Activated CD4-positive, alpha-beta T cell treated with anti-CD3 and anti-CD28 coated beads for 36 hours (primary cell): ENCODE measurements at regions of chr4 and their contacts with region 1.

Region 1: DNA sequence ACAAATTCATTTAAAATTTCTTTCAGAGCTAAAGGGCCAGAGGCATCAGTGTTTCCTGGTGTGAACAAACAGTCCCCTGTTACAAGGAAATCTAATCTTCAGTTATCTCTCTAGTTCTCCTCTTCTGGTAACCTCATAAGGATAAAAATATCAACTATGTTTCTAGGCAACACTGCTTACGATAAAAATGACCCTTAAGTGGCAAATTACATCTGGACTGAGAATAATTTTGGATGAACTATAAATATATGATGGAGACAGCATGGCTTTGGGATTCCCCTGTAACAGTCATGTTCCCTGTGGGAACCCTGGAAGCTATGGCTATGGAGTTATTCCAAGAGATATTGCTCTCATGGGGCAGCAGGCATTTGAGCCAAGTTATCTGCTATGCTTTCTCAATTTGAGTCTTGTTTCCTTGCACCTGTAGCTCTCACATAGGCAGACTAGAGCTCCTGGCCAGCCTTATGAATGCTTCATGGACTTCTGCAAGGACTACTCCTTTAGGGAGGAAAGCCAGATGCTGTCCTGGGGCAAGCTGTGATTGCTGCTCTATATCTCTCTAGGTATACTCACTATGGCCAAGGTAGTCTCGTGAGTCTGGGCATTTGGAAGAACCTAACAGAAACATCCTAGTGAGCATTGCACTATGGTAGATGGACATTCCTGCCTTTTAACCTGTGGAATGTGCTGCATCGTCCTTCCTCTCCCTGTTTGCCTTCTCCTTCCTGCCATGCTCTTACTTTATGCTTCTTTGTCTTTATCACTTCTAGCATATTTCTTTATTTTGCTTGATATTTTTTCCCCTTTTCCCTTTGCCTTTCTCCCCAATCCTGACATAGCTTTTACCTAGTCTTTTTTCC is 14.2 kb downstream of the C4orf33 start:
- DNase-seq: no peak
- ATAC-seq: no peak
- H3K4me3 Mint-ChIP-seq: no peak overlapping the region
- H3K27ac Mint-ChIP-seq: no peak overlapping the region
- H3K4me1 Mint-ChIP-seq: no peaks in the 10 kb centered on the region
- H3K27me3 Mint-ChIP-seq: no peaks in the 10 kb centered on the region

Region 2: GRCh38 chr4:128558896-128559679 is 551.1 kb before region 1 on chr4:
- CTCF ChIA-PET with region 1: no interaction called
- POLR2A ChIA-PET with region 1: no interaction called
- intact Hi-C with region 1: loop called in 1 of 2 experiments (anchors 10 kb)
- DNase-seq: no peak
- ATAC-seq: no peak
- H3K4me3 Mint-ChIP-seq: no peak overlapping the region
- H3K27ac Mint-ChIP-seq: no peak overlapping the region
- H3K4me1 Mint-ChIP-seq: peaks cover 1% of the 10 kb centered on the region
- H3K27me3 Mint-ChIP-seq: no peaks in the 10 kb centered on the region

Region 3: DNA sequence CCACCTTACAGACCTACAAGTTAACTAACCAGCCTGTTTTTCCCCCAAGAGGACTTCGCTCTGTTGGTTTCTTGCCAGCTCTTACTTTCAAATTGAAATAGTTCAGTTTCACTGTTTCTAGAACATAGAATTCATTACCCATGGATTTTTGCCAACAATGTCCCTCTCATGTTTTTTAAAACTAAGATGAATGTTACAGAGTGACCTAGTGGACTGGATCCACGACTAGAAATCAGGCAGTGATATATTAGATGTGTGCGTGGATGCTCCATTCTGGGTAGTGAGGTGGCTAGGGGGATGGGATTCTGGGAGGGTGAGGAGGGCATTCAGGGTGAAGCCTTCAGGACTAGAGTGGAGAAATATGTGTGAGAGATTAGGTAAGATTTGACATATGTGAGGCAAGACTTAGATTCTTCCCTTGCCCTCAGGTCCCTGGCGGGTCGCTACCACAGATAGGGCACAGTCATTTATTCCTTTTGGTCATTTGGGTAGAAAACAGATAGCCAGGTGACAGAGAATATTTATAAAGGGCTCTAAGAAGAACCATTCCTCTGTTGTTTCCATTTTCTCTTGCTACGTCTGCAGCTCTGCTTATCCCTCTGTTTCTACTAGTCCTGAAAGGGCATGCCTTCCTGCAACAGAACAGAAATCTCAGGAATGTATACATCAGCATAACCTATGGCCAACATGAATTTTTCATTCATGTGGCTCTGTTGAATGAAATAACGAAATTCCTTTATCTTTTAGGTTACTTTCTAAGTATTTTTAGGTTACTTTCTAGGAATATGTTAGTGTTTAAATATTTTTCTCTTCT is 316.1 kb before region 1 on chr4:
- CTCF ChIA-PET with region 1: no interaction called
- POLR2A ChIA-PET with region 1: no interaction called
- intact Hi-C with region 1: no loop called
- DNase-seq: no peak
- ATAC-seq: no peak
- H3K4me3 Mint-ChIP-seq: no peak overlapping the region
- H3K27ac Mint-ChIP-seq: no peak overlapping the region
- H3K4me1 Mint-ChIP-seq: no peaks in the 10 kb centered on the region
- H3K27me3 Mint-ChIP-seq: no peaks in the 10 kb centered on the region

Region 4: GRCh38 chr4:129077326-129077725 is 32.9 kb before region 1 on chr4:
- CTCF ChIA-PET with region 1: no interaction called
- POLR2A ChIA-PET with region 1: no interaction called
- intact Hi-C with region 1: no loop called
- DNase-seq: no peak
- ATAC-seq: no peak
- H3K4me3 Mint-ChIP-seq: no peak overlapping the region
- H3K27ac Mint-ChIP-seq: no peak overlapping the region
- H3K4me1 Mint-ChIP-seq: peaks cover 2% of the 10 kb centered on the region
- H3K27me3 Mint-ChIP-seq: no peaks in the 10 kb centered on the region